PC-9 (cell line): ENCODE measurements at regions of chr3 and their contacts with region 1.

Region 1: DNA sequence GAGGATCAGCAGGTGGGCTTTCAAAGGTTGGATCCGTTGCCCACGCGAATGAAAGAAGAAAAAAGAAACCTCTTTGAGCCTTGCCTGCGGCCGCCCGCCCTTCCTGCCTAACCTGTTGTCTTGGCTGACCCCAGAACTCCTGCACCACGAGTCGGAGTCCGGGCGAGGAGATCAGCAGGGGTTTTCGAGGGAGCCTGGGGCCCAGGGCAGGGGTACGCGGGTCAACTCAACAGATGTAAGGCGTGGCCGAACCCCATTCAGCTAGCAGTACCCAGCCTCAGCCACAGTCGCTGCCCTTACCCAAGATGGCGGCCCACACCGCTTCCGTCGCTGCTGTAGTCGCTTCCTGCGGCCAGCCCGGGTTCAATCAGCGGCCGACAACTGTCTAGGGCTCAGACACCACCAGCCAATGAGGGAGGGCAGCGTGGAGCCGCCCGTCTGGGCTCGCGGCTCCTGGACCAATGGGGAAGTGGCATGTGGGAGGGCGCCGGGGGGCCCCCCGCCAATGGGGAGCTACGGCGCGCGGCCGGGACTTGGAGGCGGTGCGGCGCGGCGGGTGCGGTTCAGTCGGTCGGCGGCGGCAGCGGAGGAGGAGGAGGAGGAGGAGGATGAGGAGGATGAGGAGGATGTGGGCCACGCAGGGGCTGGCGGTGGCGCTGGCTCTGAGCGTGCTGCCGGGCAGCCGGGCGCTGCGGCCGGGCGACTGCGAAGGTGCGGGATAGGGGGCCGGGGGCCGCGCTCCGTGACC is at the start of gene MANF:
- DNase-seq: peak; percentile 94 to 97
- H3K4me3 ChIP-seq: peak within 1 kb of the TSS; percentile 91
- H3K27ac ChIP-seq: peak within 1 kb of the TSS; percentile 84
- H3K4me1 ChIP-seq: peaks cover 41% of the 10 kb centered on the region
- H3K27me3 ChIP-seq: no peaks in the 10 kb centered on the region
- CTCF ChIP-seq: no peak
- total RNA-seq, gene MANF: 75.0 and 79.1 TPM in 2 replicates

Region 2: GRCh38 chr3:50358911-50359759 is 1025.8 kb before region 1 on chr3 and contains the start of gene TMEM115:
- CTCF ChIA-PET with region 1: no interaction called
- POLR2A ChIA-PET with region 1: no interaction called
- intact Hi-C with region 1: loop called (anchors 5 kb)
- DNase-seq: peak; percentile 92 to 93
- H3K4me3 ChIP-seq: peak within 1 kb of the TSS; percentile 86
- H3K27ac ChIP-seq: no peak within 1 kb of the TSS
- H3K4me1 ChIP-seq: peaks cover 27% of the 10 kb centered on the region
- H3K27me3 ChIP-seq: no peaks in the 10 kb centered on the region
- CTCF ChIP-seq: no peak
- total RNA-seq, gene TMEM115: 35.2 and 43.5 TPM in 2 replicates

Region 3: GRCh38 chr3:50568947-50569749 is 815.8 kb before region 1 on chr3 and contains the start of gene HEMK1:
- CTCF ChIA-PET with region 1: interaction called, 12 read pairs
- POLR2A ChIA-PET with region 1: interaction called, 5 read pairs
- intact Hi-C with region 1: loop called (anchors 1 kb)
- DNase-seq: peak; percentile 82 to 96
- H3K4me3 ChIP-seq: peak within 1 kb of the TSS; percentile 94
- H3K27ac ChIP-seq: 0 out of 2 replicates have a peak within 1 kb of the TSS, but pooled peaks have one; percentile 24
- H3K4me1 ChIP-seq: peaks cover 13% of the 10 kb centered on the region
- H3K27me3 ChIP-seq: no peaks in the 10 kb centered on the region
- CTCF ChIP-seq: no peak
- total RNA-seq, gene HEMK1: 20.6 and 24.2 TPM in 2 replicates

Region 4: DNA sequence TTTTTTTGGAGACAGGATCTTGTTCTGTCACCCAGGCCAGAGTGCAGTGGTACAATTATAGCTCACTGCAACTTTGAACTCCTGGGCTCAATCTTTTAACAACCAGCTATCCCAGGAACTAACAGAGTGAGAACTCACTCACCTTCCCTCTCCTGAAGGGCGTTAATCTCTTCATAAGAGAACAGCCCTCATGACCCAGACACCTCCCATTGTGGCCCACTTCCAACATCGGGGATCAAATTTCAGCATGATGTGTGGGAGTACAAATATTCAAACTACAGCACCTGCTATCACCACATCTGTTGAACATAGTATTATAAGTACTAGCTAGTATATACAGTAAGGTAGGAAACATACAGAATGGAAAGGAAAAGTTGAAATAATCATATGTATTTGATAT is 577.6 kb before region 1 on chr3:
- CTCF ChIA-PET with region 1: no interaction called
- POLR2A ChIA-PET with region 1: interaction called, 8 read pairs
- intact Hi-C with region 1: loop called (anchors 5 kb)
- DNase-seq: peak; percentile 82 to 86
- H3K4me3 ChIP-seq: peak overlapping the region; percentile 37; the same call in 1 of the 2 replicates
- H3K27ac ChIP-seq: peak overlapping the region; percentile 96
- H3K4me1 ChIP-seq: peaks cover 44% of the 10 kb centered on the region
- H3K27me3 ChIP-seq: no peaks in the 10 kb centered on the region
- CTCF ChIP-seq: no peak

Region 5: GRCh38 chr3:51057121-51057520 is 327.8 kb before region 1 on chr3:
- CTCF ChIA-PET with region 1: no interaction called
- POLR2A ChIA-PET with region 1: interaction called, 17 read pairs
- intact Hi-C with region 1: no loop called
- DNase-seq: no peak
- H3K4me3 ChIP-seq: no peak overlapping the region
- H3K27ac ChIP-seq: no peak overlapping the region
- H3K4me1 ChIP-seq: no peaks in the 10 kb centered on the region
- H3K27me3 ChIP-seq: no peaks in the 10 kb centered on the region
- CTCF ChIP-seq: no peak

Region 6: GRCh38 chr3:51974963-51975851 is 590.3 kb after region 1 on chr3 and contains the start of gene ABHD14A:
- CTCF ChIA-PET with region 1: no interaction called
- POLR2A ChIA-PET with region 1: no interaction called
- intact Hi-C with region 1: no loop called
- DNase-seq: peak in 1 of 2 experiments; percentile 76
- H3K4me3 ChIP-seq: peak within 1 kb of the TSS; percentile 97
- H3K27ac ChIP-seq: 0 out of 2 replicates have a peak within 1 kb of the TSS, but pooled peaks have one; percentile 5
- H3K4me1 ChIP-seq: peaks cover 8% of the 10 kb centered on the region; the same call in 1 of the 2 replicates
- H3K27me3 ChIP-seq: no peaks in the 10 kb centered on the region
- CTCF ChIP-seq: no peak
- total RNA-seq, gene ABHD14A: 7.1 and 9.9 TPM in 2 replicates